ENCODE measurements at regions of chr14 and their contacts with region 1.

Region 1: DNA sequence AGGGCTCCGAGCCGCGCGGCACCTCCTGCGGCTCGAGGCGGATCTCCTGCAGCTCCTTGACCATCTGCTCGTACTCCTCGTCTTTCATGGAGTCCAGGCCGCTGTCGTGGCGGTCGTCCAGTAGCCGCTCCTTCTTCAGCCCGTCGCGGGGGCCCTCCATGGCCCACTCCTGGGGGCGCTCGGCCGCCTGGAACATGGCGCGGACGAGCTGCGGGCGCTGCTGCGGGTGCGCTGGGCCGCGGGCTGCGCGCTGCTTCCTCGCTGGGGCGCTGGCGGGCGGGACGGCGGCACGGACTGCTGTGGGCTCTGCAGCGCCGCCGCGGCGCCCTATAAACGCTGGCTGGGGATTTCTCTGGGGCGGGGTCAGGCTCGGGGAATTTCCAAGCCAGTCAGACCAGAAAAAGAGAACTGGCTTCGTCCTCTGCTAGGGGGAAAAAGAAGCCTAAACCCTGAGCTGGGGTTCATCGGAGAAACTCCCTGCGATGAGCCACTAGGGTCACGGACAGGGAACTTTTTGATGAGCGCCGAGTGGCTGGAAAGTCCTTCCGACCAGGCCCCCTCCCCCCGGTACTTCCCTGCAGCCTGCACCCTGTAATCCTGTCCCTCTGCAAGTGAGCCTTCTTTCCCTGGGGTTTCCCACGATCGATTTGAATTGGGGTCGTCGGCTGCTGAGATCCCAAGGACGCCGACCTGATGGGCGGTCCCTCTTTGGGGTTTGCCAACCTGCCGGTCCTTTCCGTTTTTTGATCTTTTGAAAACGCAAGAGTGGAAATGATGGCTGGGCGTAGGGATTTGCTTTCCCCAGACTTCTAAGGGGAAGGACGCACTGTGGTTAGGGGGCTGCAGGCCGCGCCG is at the start of gene NFKBIA:
- DNase-seq: peak; percentile 88
- CTCF ChIP-seq: peak; percentile 66

Region 2: GRCh38 chr14:34665785-34666435 is 738.8 kb before region 1 on chr14:
- in situ Hi-C with region 1: loop called (anchors 25 kb)
- DNase-seq: no peak
- CTCF ChIP-seq: no peak

Region 3: GRCh38 chr14:35292051-35292769 is 112.5 kb before region 1 on chr14 and contains the start of gene PSMA6:
- in situ Hi-C with region 1: no loop called
- DNase-seq: peak; percentile 94
- CTCF ChIP-seq: no peak

Measured in GM13976 (cell line).